Sigmoid colon (tissue), 7 donors: ENCODE measurements at regions of chr9 and their contacts with region 1.

Region 1: DNA sequence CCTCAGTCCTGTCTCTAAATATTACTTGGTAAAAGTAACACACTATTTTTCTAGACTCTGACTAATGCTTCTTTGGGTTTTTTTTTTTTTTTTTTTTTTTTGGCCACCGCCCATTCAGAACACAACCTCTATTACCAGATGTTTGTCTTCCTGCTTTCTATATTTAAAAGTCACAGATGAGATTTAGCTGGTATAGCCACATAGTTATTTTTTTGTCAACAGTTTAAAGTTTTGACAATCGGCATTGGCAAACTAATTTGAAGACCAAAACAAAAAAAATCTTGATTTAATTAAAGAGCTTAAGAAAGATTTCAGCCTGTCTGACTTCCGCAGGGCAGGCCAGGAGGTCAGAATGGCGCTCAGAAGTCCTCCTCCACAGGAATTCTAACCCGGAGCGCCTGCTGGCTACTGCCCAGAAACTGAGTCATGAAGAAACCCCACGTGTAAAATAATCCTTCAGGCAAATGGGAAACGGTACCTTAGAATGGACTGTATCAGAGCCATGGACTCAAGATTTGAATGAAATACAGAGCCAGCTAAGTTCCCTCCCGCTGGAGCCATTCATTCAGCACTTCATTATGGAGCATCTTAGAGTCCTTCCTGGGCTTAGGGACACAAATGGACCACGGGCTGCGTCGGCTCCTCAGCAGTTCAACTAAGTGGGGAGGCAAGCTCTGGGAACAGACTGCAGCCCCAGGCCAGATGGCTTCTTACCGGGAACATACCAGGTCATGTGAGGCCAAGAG is 55.6 kb downstream of the PTPDC1 start:
- DNase-seq: peak; percentile 96
- H3K4me3 ChIP-seq: no peak overlapping the region
- H3K27ac ChIP-seq: peak overlapping the region; percentile 83 to 90 (median 88)
- H3K4me1 ChIP-seq: peaks cover 0 to 70% (median 65%) of the 10 kb centered on the region in 4 donors
- H3K27me3 ChIP-seq: no peaks in the 10 kb centered on the region
- CTCF ChIP-seq: no peak
- EP300 ChIP-seq: peak in 2 of 4 donors; percentile 32 to 44
- POLR2A ChIP-seq: no peak

Region 2: DNA sequence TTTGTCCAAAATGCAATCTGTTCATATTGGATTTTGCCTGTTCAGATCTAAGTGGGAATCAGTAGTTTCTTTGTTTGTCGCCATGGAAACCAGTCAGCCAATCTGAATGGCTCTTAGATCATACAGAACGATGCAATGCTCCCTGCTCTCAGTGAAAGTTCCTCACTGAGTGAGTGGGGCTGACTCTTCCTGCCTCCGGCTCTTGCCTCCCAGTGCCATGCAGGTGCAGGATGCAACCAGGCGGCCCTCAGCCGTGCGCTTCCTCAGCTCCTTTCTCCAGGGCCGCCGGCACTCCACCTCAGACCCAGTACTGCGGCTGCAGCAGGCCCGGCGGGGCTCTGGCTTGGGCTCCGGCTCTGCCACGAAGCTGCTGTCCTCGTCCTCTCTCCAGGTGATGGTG is 55.5 kb before region 1 on chr9 and contains the start of gene PTPDC1:
- intact Hi-C with region 1: loop called (anchors 10 kb)
- DNase-seq: no peak
- H3K4me3 ChIP-seq: peak within 1 kb of the TSS in 3 of 4 donors; percentile 16 to 36 (median 20)
- H3K27ac ChIP-seq: peak within 1 kb of the TSS in 3 of 4 donors; percentile 30 to 55 (median 42)
- H3K4me1 ChIP-seq: peaks cover 0 to 40% (median 15%) of the 10 kb centered on the region in 4 donors
- H3K27me3 ChIP-seq: no peaks in the 10 kb centered on the region
- CTCF ChIP-seq: no peak
- EP300 ChIP-seq: no peak
- POLR2A ChIP-seq: no peak
- total RNA-seq, gene PTPDC1: 12.0 to 16.3 (median 13.8) TPM

Region 3: DNA sequence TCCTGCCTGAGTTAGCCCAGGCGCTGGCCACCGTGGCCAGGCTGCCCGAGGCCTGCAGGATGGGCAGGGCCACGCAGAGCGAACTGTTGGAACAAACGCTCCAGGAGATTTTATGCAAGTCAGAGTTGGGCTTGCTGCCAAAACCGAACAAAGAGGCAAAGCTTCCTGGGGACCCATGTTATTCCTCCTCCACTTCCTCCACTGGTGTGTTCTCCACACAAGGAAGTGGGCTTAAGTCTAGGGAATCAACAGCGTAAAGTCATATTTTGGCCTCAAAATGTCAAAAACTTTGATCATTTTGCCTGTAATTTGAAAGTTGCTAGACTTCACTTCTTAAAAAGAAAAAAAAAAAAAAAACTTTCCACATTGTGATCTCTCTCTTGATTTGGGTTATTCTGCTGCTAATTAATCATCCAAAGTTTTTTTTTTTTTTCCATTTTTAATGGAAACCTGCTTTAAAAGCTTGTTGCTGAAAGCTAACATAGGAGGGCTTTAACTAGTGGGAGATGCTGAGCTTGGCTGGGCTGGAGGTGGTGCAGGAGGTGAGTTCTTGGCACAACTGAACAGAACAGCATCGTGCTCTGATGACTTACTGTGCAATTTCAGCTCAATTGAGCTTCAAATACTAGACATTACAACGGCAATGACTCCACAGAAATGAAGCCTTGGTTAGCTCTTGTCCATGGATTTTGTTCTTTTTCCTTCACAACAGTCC is 17.4 kb after region 1 on chr9:
- intact Hi-C with region 1: no loop called
- DNase-seq: peak; percentile 93
- H3K4me3 ChIP-seq: no peak overlapping the region
- H3K27ac ChIP-seq: peak overlapping the region; percentile 60 to 73 (median 66)
- H3K4me1 ChIP-seq: peaks cover 0 to 36% (median 33%) of the 10 kb centered on the region in 4 donors
- H3K27me3 ChIP-seq: no peaks in the 10 kb centered on the region
- CTCF ChIP-seq: no peak
- EP300 ChIP-seq: no peak
- POLR2A ChIP-seq: no peak